ENCODE measurements at regions of chr3 and their contacts with region 1.

Region 1: DNA sequence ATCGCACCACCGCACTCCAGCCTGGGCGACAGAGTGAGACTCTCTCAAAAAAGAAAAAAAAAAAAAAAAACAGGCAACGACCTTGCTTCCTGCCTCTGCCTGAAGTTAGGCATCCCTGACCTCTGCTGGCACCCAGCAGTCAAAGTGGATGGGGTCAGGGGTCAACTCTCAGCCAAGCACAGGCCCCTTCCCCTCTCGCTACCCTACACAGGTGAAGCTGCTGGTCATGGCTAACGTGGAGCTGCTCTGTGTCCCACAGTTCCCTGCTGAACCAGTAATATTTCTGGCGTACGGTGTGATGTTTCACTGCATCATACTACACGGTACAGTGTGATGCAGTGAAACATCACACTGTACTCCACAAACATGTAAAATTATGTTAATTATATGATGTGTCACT is 13.9 kb upstream of the FRG2C start:
- DNase-seq: no peak
- ATAC-seq: peak; percentile 26
- H3K4me3 ChIP-seq: no peak overlapping the region
- H3K4me3 Mint-ChIP-seq: no peak overlapping the region
- H3K27ac ChIP-seq: no peak overlapping the region
- H3K27ac Mint-ChIP-seq: no peak overlapping the region
- H3K4me1 ChIP-seq: no peaks in the 10 kb centered on the region
- H3K4me1 Mint-ChIP-seq: peaks cover 0 to 2% (median 0%) of the 10 kb centered on the region in 7 donors
- H3K27me3 ChIP-seq: no peaks in the 10 kb centered on the region
- H3K27me3 Mint-ChIP-seq: peaks cover 0 to 8% (median 2%) of the 10 kb centered on the region in 5 donors

Region 2: GRCh38 chr3:75781079-75781745 is 131.0 kb after region 1 on chr3:
- CTCF ChIA-PET with region 1: no interaction called
- POLR2A ChIA-PET with region 1: no interaction called
- intact Hi-C with region 1: loop called in 1 of 2 experiments (anchors 10 kb)
- DNase-seq: no peak
- ATAC-seq: no peak
- H3K4me3 ChIP-seq: no peak overlapping the region
- H3K4me3 Mint-ChIP-seq: peak overlapping the region in 1 of 10 donors; percentile 23
- H3K27ac ChIP-seq: no peak overlapping the region
- H3K27ac Mint-ChIP-seq: peak overlapping the region in 1 of 9 donors; percentile 43
- H3K4me1 ChIP-seq: peaks cover 0 to 4% of the 10 kb centered on the region in 2 donors
- H3K4me1 Mint-ChIP-seq: peaks cover 0 to 21% (median 11%) of the 10 kb centered on the region in 7 donors
- H3K27me3 ChIP-seq: no peaks in the 10 kb centered on the region
- H3K27me3 Mint-ChIP-seq: no peaks in the 10 kb centered on the region